ENCODE measurements at regions of chr1 and their contacts with region 1.

Region 1: DNA sequence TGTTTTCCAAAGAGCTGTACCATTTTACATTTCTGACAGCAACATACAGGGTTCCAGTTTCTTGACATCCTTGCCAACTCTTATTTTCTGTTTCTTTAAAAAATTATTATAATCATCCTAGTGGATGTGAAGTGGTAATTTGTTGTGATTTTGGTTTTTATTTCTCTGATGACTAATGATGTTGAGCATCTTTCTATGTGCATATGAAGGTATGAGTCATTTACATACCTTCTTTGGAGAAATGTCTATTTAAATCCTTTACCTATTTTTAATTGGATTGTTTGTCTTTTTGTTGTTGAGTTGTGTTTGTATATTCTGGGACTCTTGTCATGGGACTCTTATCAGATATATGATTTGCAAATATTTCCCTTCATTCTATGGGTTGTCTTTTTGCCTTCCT is 20.8 kb upstream of the MPC2 start:
- DNase-seq: peak; percentile 38
- ATAC-seq: no peak
- H3K4me3 ChIP-seq: no peak overlapping the region
- H3K27ac ChIP-seq: no peak overlapping the region
- H3K4me1 ChIP-seq: no peaks in the 10 kb centered on the region
- H3K27me3 ChIP-seq: no peaks in the 10 kb centered on the region
- CTCF ChIP-seq: no peak
- POLR2A ChIP-seq: no peak
- RAD21 ChIP-seq: no peak

Region 2: DNA sequence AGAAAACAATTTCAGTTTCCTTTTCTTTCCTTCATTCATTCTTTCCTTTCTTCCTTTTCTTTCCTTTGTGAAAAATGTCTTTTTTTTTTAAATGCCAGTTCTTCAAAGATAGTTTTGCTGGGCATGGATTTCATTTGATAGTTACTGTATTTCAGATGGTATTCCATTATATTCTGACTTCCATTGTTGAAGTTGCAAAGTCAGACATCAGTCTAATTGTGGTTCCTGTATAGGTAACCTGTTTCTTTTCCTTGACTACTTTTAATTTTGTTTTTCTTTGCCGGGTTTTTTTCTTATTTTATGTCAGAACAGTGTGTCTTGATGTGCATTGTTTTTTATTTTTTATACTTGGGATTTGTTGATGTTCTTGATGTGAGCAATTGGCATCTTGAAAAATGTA is 19.5 kb after region 1 on chr1:
- CTCF ChIA-PET with region 1: no interaction called
- POLR2A ChIA-PET with region 1: no interaction called
- dilution Hi-C with region 1: no loop called
- in situ Hi-C with region 1: no loop called
- intact Hi-C with region 1: no loop called
- DNase-seq: no peak
- ATAC-seq: no peak
- H3K4me3 ChIP-seq: no peak overlapping the region
- H3K27ac ChIP-seq: no peak overlapping the region
- H3K4me1 ChIP-seq: no peaks in the 10 kb centered on the region
- H3K27me3 ChIP-seq: no peaks in the 10 kb centered on the region
- CTCF ChIP-seq: no peak
- POLR2A ChIP-seq: no peak
- RAD21 ChIP-seq: no peak

Region 3: GRCh38 chr1:167991546-167991945 is 33.8 kb after region 1 on chr1:
- CTCF ChIA-PET with region 1: no interaction called
- POLR2A ChIA-PET with region 1: no interaction called
- dilution Hi-C with region 1: no loop called
- in situ Hi-C with region 1: no loop called
- intact Hi-C with region 1: loop called (anchors 5 kb)
- DNase-seq: no peak
- ATAC-seq: no peak; the same call in 1 of the 2 replicates
- H3K4me3 ChIP-seq: no peak overlapping the region
- H3K27ac ChIP-seq: no peak overlapping the region
- H3K4me1 ChIP-seq: peaks cover under 1% of the 10 kb centered on the region
- H3K27me3 ChIP-seq: no peaks in the 10 kb centered on the region
- CTCF ChIP-seq: no peak
- POLR2A ChIP-seq: no peak
- RAD21 ChIP-seq: no peak

Measured in IMR-90 (cell line).